Endothelial cell of umbilical vein (primary cell): ENCODE measurements at regions of chr16 and their contacts with region 1.

Region 1: DNA sequence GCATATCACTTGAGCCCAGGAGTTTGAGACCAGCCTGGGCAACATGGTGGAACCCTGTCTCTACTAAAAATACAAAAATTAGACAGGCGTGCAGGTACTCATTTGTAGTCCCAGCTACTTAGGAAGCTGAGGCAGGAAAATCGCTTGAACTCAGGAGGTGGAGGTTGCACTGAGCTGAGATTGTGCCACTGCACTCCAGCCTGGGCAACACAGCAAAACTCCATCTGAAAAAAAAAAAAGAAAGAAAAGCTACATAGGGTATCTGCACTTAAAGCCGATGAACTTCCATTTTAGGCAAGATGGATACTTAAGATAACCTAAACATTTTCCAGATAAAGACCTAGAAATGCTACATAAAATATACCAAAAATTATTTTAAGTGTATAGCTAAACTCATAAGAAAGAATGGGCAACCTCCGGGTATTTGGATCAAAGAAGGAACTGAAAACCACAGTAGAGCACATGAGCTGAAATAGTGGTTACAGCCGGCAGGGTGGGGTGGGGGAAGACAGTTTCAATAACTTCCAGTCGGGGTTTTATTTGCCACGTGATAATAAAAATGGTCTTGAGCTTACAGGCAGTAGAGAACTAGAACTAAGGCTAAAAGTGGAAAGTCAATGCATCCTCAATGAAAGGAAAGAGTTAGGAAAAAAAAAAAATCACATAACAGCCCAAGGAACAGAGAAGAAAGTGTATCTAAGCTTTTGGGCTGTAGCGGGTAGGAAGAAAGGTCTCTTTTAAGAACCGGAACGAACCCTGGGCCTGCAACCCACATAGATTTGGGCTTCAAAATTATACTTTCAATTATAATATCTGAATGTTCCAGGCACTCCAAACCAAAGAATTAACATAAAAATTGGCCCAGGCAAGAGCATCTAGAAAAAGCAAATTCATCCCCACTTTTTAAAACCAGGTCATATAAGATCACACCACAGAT is 53.1 kb downstream of the CFDP1 start:
- DNase-seq: peak; percentile 17
- H3K4me3 ChIP-seq: no peak overlapping the region
- H3K27ac ChIP-seq: peak overlapping the region; percentile 59
- H3K4me1 ChIP-seq: peaks cover 55% of the 10 kb centered on the region
- H3K27me3 ChIP-seq: no peaks in the 10 kb centered on the region
- CTCF ChIP-seq: no peak
- POLR2A ChIP-seq: no peak

Region 2: GRCh38 chr16:75351183-75351582 is 29.0 kb before region 1 on chr16:
- CTCF ChIA-PET with region 1: interaction called, 8 read pairs
- POLR2A ChIA-PET with region 1: interaction called, 4 read pairs
- dilution Hi-C with region 1: no loop called
- intact Hi-C with region 1: loop called (anchors 1 kb)
- DNase-seq: peak; percentile 92
- H3K4me3 ChIP-seq: peak overlapping the region in 1 of 3 experiments; percentile 39
- H3K27ac ChIP-seq: peak overlapping the region; percentile 94
- H3K4me1 ChIP-seq: peaks cover 20% of the 10 kb centered on the region
- H3K27me3 ChIP-seq: no peaks in the 10 kb centered on the region
- CTCF ChIP-seq: no peak
- POLR2A ChIP-seq: no peak